PC-9 (cell line): ENCODE measurements at regions of chr10 and their contacts with region 1.

Region 1: GRCh38 chr10:96814264-96814663 is 17.8 kb upstream of the LCOR start:
- DNase-seq: peak; percentile 6 to 51
- H3K4me3 ChIP-seq: no peak overlapping the region
- H3K27ac ChIP-seq: no peak overlapping the region
- H3K4me1 ChIP-seq: no peaks in the 10 kb centered on the region
- H3K27me3 ChIP-seq: no peaks in the 10 kb centered on the region
- CTCF ChIP-seq: no peak

Region 2: DNA sequence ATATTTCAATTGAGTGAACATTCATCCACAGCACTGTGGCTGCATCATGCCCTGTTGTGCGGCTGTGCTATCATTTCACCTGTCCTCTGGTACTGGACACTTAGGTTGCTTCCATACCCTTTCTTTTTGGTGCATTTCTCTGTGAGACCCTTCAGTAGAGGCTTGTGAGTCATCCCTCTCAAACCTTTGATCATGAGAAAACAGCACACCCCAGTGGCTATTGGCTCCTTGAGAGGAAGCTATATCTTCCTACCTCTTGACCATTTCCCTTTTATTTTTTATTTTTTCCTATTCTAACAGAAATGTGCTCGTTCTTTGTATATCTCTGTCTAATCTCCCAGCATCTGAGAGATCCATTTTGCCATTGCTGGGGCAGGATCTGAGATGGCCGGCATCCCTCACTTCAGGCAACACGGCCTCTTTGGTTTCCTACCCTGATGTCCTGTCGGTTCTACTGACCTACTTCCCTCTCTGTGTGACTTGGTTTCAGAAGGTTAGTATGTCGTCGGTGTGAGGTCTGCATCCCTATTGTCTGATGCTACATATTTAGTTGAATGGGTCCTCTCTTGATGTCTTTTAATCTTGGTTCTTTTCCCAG is 70.2 kb before region 1 on chr10:
- CTCF ChIA-PET with region 1: no interaction called
- POLR2A ChIA-PET with region 1: no interaction called
- intact Hi-C with region 1: no loop called
- DNase-seq: no peak
- H3K4me3 ChIP-seq: no peak overlapping the region
- H3K27ac ChIP-seq: no peak overlapping the region
- H3K4me1 ChIP-seq: no peaks in the 10 kb centered on the region
- H3K27me3 ChIP-seq: no peaks in the 10 kb centered on the region
- CTCF ChIP-seq: peak; percentile 32; the same call in 1 of the 2 replicates

Region 3: GRCh38 chr10:97032624-97033023 is 218.4 kb after region 1 on chr10:
- CTCF ChIA-PET with region 1: no interaction called
- POLR2A ChIA-PET with region 1: interaction called, 13 read pairs
- intact Hi-C with region 1: no loop called
- DNase-seq: no peak
- H3K4me3 ChIP-seq: no peak overlapping the region
- H3K27ac ChIP-seq: no peak overlapping the region
- H3K4me1 ChIP-seq: 0 out of 2 replicates have a peak, but pooled peaks cover 2% of the 10 kb centered on the region
- H3K27me3 ChIP-seq: no peaks in the 10 kb centered on the region
- CTCF ChIP-seq: no peak